Aorta (tissue), 5 donors: ENCODE measurements at regions of chr11 and their contacts with region 1.

Region 1: DNA sequence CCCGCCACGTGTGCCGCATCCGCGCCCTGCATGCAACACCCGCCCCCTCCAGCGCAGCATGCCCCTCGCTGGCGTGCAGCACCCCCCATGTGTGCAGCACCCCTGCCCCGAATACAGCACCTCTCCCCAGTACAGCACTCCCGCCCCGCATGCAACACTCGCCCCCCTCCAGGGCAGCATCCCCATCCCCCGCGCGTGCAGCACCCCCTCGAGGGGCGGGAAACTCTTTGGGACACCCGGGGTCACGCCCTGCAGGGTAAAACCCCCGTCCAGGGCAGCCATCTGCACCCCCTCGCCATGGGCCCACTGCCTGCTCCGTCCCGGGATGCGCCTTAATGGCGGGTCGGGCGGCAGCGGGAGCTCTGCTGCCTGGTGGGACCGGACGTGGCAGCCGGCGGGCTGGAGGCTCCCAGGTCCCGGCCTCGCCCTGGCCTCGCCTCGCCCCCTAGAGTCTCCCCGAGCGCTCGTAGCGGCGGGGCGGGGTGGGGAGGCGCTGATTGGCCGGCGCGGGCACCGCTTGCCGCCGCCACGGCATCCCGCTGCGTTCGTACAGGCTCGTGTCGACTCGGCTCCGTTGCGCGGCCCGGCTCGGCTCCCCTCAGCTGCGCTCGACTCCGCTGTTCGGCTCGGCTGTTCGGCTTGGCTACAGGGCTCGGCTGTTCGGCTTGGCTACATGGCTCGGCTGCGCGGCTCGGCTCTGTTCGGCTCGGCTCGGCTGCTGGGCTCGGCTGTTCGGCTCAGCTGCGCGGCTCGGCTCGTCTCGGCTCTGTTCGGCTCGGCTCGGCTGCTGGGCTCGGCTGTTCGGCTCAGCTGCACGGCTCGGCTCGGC is 417 bp upstream of the BRSK2 start:
- DNase-seq: peak; percentile 98 to 99
- ATAC-seq: peak; percentile 99
- H3K4me3 ChIP-seq: peak overlapping the region; percentile 22 to 28
- H3K27ac ChIP-seq: no peak overlapping the region
- H3K4me1 ChIP-seq: no peaks in the 10 kb centered on the region
- H3K27me3 ChIP-seq: no peaks in the 10 kb centered on the region

Region 2: DNA sequence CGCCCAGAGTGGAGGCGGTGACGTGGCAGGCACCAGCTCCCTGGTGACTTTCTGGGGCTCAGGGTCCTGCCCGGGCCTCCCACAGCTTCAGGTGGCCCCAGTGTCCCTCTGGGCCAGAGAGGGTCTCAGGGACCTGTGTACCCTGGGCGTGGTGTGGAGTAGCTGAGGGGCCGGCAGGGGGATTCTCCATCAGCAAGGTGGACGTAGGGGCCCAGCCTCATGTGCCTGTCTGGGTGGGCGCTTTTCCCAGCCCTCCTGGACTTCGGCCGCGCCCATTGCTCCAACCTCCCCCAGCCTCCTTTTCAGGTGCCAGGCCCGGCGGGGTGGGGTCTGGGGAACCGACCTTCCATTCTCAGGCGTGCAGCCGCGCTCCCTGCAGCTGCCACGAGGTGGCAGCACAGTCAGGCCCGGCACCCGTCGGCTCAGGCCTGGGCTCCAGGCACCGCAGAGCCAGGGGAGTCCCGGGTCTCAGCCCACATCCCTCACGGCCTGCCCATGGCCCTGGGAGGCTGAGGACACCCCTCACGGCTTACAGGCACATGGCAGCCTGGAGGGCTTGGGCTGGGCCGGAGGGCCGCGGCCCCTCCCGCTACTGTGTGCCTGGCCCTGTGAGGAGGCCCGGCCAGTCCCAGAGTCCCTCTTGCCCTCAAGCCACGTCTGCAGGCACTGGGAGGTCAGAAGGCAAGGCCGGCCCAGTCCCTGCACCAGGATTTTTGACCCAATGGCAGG is 186.4 kb before region 1 on chr11:
- intact Hi-C with region 1: loop called in 1 of 2 experiments (anchors 10 kb)
- DNase-seq: peak; percentile 55 to 88
- ATAC-seq: peak; percentile 73
- H3K4me3 ChIP-seq: no peak overlapping the region
- H3K27ac ChIP-seq: no peak overlapping the region
- H3K4me1 ChIP-seq: no peaks in the 10 kb centered on the region
- H3K27me3 ChIP-seq: no peaks in the 10 kb centered on the region

Region 3: DNA sequence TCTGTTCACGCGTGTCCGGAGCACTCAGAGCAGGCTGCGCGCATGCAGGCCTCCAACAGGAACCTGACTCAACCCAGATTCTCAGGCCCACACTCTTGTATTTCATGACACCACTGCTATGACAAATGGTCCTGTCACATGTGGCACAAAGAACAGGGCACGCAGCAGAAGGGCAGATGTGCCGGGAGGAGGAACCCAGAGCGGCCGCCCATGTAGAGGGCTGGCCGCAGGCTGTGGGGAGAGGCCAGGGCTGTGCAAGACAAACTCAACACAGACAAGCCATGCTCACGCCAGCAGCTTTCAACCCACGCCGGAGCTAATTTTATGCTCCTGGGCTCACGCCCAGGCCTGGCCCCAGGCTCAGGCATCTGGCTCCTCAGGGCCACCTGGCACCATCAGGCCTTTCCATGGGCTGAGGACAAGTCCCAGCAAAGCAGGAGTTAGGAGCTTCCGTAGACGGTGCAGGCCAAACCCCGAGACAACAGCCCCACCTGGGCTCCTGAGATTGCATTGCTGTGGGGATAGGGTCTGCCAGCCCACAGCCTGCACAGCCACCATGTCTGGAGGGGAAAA is 142.8 kb after region 1 on chr11:
- intact Hi-C with region 1: loop called in 1 of 2 experiments (anchors 10 kb)
- DNase-seq: peak; percentile 82 to 88
- ATAC-seq: peak; percentile 79
- H3K4me3 ChIP-seq: no peak overlapping the region
- H3K27ac ChIP-seq: peak overlapping the region in 1 of 2 donors; percentile 64
- H3K4me1 ChIP-seq: peaks cover 0 to 7% of the 10 kb centered on the region in 2 donors
- H3K27me3 ChIP-seq: no peaks in the 10 kb centered on the region